Activated naive CD8-positive, alpha-beta T cell treated with anti-CD3 and anti-CD28 coated beads, Interleukin-2, amount 10 ng/mL, durations not matched to agents 7 days and 5 days (primary cell): ENCODE measurements at regions of chr11 and their contacts with region 1.

Region 1: DNA sequence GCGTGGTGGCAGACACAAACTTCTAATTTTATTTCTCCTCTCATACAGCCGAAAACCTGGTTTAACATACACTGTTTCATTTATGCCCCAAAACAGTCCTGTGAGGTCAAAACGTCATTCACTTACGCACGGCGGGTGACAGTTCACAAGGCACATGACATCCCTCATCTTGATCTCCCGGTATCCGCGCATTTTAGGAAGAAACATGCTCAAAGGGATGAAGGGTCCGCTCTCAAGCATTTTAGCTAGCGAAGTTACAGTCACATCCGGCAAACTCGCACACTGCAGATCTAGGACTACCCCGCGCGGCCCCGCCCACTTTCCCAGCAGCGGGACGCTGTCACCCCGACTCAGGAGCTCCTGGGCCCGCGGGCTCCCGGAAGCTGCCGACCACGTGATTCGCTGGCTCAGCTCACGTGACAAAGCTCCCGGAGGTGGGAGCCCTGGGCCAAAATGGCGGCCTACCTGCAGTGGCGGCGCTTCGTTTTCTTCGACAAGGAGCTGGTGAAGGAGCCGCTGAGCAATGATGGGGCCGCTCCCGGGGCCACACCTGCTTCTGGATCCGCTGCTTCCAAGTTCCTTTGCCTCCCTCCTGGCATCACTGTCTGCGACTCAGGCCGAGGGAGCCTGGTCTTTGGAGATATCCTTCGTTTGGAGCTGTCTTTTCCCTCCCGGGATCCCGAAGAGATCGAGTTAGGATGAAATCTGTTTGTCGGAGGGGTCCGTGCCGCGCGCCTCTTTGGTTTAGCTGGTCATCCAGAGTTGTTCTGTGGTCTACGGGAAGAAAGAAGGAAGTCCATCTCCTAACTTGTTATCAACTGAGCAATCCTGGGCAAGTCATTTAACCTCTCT is at the start of gene VPS11:
- DNase-seq: peak; percentile 98
- ATAC-seq: peak; percentile 99
- H3K4me3 Mint-ChIP-seq: peak within 1 kb of the TSS; percentile 92
- H3K27ac Mint-ChIP-seq: peak within 1 kb of the TSS; percentile 96
- H3K4me1 Mint-ChIP-seq: peaks cover 30% of the 10 kb centered on the region
- H3K27me3 Mint-ChIP-seq: no peaks in the 10 kb centered on the region
- total RNA-seq, gene VPS11: 41.2 to 46.2 TPM

Region 2: DNA sequence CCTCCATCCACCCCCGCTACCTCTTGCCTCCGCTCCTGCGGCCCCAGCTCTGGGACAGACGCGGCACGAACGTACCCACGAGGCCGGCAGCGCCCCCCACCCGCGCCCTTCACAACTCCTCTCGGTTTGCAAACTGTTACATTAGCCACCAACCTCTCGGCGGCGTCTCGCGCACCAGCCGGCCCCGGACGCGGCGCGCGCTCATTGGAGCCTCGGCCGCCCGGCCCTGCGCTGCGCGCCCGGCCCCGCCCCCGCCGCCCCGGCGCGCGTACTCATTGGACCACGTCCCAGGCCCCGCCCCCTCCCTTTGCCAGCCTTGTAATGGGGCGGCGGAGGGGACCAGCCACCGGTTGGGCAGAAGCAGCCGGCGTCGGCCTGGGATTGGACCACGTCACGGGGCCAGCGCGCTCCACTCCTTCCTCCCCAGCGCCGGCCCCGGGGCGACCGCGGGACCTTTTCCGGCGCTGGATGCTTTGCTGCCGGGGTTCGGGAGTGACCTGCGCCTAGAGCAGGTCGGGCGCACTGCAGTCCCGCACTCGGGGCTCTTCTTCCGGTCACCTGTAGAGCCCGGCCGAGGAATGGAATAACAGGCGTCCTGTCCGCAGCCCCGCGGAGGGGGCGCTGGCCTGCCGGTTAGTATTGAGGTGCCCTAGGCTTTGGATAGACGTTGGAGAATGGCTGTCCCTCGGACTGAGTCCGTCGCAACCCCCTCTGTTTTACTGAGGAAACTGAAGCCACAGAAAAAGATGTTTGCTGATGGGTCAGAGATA is 10.4 kb before region 1 on chr11 and contains the start of gene HYOU1:
- POLR2A ChIA-PET with region 1: interaction called, 44 read pairs
- DNase-seq: peak; percentile 99
- ATAC-seq: peak; percentile 98
- H3K4me3 Mint-ChIP-seq: peak within 1 kb of the TSS; percentile 98
- H3K27ac Mint-ChIP-seq: peak within 1 kb of the TSS; percentile 98
- H3K4me1 Mint-ChIP-seq: peaks cover 22% of the 10 kb centered on the region
- H3K27me3 Mint-ChIP-seq: no peaks in the 10 kb centered on the region
- total RNA-seq, gene HYOU1: 76.5 to 83.1 TPM

Region 3: DNA sequence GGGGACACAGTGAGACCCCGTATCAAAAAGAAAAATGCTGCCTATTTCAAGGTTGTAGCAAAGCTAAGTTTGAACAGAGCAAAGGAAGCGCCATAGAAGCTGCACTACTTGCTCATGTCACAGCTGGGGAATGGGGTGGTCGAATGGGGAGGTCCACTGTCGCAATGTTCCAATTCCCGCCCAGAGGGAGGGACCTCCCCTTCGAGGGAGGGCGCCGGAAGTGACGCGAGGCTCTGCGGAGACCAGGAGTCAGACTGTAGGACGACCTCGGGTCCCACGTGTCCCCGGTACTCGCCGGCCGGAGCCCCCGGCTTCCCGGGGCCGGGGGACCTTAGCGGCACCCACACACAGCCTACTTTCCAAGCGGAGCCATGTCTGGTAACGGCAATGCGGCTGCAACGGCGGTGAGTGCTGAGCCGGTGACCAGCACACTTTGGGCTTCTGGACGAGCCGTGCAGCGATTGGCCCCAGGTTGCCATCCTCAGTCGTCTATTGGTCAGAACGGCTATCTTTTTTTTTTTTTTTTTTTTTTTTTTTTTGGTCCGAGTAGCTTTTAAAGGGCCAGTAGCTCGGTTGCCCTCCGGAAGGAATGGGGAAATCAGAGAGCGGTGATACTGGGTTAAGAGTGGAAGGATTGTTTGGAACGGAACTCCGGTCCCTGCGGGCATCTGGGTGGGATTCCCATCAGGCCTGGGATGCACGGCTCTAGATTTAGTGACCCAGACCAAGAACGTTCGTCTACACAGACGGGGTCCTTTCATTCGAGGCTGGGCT is 17.3 kb after region 1 on chr11 and contains the start of gene HMBS:
- POLR2A ChIA-PET with region 1: interaction called, 32 read pairs
- DNase-seq: peak; percentile 92
- ATAC-seq: peak; percentile 88
- H3K4me3 Mint-ChIP-seq: peak within 1 kb of the TSS; percentile 93
- H3K27ac Mint-ChIP-seq: peak within 1 kb of the TSS; percentile 90
- H3K4me1 Mint-ChIP-seq: peaks cover 25% of the 10 kb centered on the region
- H3K27me3 Mint-ChIP-seq: no peaks in the 10 kb centered on the region
- total RNA-seq, gene HMBS: 18.0 to 18.8 TPM